Activated CD8-positive, alpha-beta memory T cell treated with anti-CD3 and anti-CD28 coated beads, Interleukin-2, amount 10 ng/mL, durations not matched to agents 7 days and 5 days (primary cell): ENCODE measurements at regions of chr1 and their contacts with region 1.

Region 1: GRCh38 chr1:28792644-28793121 is 19.3 kb upstream of the OPRD1 start:
- DNase-seq: no peak
- ATAC-seq: no peak
- H3K4me3 Mint-ChIP-seq: no peak overlapping the region
- H3K27ac Mint-ChIP-seq: no peak overlapping the region
- H3K4me1 Mint-ChIP-seq: no peaks in the 10 kb centered on the region
- H3K27me3 Mint-ChIP-seq: peaks cover 7% of the 10 kb centered on the region

Region 2: DNA sequence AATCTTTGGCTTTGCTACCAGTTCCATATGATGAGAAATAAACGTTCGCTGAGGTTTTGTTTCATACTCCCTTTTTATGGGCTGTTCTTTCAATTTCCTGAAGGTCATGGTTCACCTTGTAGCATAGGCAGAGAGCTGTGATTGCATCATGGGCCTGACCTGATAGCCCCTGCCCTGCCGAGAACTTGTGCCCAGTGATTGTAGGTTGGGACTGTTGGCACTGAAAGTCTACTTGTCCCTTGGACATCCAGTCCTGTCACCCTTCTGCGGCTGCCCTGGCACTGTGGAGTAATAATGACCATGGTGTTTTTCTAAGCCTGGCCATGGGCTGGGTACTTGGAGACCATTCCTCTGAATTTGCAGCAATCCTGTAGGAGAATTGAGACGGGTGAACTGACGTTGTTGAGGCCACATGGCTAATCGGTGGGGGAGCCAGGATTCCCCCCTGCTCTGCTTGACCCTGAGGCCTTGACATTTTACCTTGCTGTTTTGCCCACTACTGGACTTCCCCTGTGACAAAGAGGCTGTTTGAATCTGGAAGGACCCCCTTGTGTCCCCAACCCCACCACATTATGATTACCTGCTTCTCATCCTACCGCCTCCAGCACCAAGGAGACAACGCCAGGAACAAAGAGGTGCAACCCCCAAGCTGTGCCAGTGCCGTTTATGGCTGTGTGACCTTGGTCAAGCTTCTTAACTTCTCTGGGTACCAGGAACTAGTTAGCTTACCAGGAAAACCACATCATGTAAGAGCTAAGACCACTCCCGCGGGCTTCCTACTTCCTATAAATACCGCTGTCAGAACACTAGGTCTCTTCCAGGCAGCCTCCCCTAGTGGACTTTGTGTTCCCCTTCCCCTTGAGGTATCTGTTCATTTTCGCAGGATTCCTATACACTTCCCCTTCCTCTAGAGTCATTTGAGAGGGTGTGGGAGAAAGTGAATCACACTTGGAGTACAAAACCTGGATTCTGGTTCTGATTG is 510.0 kb before region 1 on chr1:
- CTCF ChIA-PET with region 1: no interaction called
- DNase-seq: no peak
- ATAC-seq: no peak
- H3K4me3 Mint-ChIP-seq: no peak overlapping the region
- H3K27ac Mint-ChIP-seq: peak overlapping the region; percentile 39
- H3K4me1 Mint-ChIP-seq: peaks cover 15% of the 10 kb centered on the region
- H3K27me3 Mint-ChIP-seq: no peaks in the 10 kb centered on the region

Region 3: GRCh38 chr1:28775121-28775944 is 17.4 kb before region 1 on chr1:
- CTCF ChIA-PET with region 1: interaction called, 31 read pairs
- DNase-seq: peak; percentile 77
- ATAC-seq: peak; percentile 98
- H3K4me3 Mint-ChIP-seq: peak overlapping the region; percentile 71
- H3K27ac Mint-ChIP-seq: peak overlapping the region; percentile 72
- H3K4me1 Mint-ChIP-seq: peaks cover 9% of the 10 kb centered on the region
- H3K27me3 Mint-ChIP-seq: no peaks in the 10 kb centered on the region

Region 4: DNA sequence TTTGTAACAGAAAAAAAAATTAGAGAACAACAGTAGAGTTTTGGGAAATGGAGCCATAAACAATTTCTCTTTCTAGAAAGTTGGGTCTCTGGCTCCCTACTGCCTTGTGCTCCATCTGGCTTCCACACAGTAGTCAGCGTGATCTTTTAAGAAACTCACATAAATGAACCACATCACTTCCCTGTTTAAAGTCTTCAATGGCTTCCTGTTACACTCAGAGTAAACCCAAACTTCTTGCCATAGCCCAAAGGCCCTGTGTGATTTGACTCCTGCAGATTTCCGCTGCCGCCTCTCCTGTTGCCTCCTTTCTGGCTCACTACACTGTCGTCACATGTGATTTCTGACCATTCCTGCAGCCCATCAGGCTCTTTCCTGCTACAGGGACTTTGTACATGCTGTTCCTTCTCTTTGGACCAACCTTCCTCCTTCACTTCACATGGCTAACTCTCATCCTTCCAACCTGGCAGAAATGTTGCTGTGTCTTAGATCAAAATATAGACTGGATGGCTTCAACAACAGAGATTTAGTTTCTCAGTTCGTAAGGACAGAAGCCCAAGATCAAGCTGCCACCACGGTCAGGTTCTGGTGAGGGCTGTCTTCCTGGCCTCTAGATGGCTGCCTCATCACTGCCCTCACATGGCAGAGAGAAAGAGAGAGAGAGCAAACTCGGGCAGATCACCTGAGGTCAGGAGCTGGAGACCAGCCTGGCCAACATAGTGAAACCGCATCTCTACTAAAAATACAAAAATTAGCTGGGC is 53.3 kb after region 1 on chr1:
- CTCF ChIA-PET with region 1: no interaction called
- DNase-seq: peak; percentile 44
- ATAC-seq: peak; percentile 36
- H3K4me3 Mint-ChIP-seq: no peak overlapping the region
- H3K27ac Mint-ChIP-seq: peak overlapping the region; percentile 29
- H3K4me1 Mint-ChIP-seq: peaks cover 6% of the 10 kb centered on the region
- H3K27me3 Mint-ChIP-seq: no peaks in the 10 kb centered on the region